Dorsolateral prefrontal cortex (tissue), 120 donors: ENCODE measurements at regions of chr9 and their contacts with region 1.

Region 1: DNA sequence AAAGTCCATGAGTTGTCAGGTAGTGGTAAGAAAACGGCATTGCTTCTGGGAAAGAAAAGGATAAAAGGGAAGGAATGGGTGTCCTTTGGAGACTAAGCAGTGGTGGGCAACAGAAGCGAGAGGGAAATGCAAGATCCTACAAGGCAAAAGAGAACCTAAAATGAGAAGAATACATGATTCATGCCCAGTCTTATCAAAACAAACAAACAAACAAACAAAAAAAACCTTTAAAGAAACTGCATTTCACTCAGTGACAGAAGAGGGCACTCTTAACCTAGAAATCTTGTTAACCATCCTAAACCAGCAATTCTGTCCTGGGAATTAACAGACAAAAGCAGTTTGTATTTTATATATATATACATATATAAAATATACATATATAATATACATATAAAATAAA is 88.5 kb downstream of the SUSD1 start:
- DNase-seq: no peak
- H3K4me3 ChIP-seq: peak overlapping the region in 2 of 59 donors; percentile 4 to 7
- H3K27ac ChIP-seq: no peak overlapping the region
- H3K27me3 ChIP-seq: no peaks in the 10 kb centered on the region
- CTCF ChIP-seq: peak; percentile 29 to 89 (median 71)

Region 2: GRCh38 chr9:111648066-111648465 is 438.6 kb before region 1 on chr9:
- intact Hi-C with region 1: no loop called
- DNase-seq: no peak
- H3K4me3 ChIP-seq: no peak overlapping the region
- H3K27ac ChIP-seq: no peak overlapping the region
- H3K27me3 ChIP-seq: no peaks in the 10 kb centered on the region
- CTCF ChIP-seq: no peak

Region 3: DNA sequence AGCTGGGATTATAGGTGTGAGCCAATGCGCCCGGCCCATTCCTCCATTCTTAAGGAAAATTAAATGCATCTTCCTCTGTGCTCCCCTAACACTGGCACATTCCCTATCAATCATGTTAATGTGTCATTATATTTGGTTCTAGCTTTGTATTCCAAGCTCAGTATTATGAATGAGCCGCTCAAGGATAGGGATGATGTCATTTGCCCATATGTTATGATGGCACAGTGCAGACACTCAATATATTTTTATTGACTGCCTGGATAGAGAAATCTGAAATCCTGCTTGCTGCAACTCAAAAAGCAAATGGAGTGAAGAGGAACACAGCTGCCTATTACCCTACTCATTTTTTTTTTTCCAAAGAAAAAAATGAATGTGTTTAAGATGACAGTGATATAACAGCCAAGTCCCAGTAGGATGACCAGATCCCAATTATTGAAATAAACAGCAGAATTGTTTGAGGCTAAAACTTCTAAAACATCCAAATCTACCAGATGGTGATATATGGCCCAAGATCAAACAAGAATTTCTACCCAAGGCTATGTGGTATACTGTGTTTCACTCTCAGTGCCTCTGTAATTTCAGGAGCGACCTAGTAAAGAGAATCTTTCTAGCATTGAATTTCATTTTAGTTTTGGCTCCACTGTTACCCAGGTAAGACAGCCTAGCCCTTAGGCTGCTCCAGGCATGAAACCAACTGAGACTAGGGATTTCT is 72.2 kb after region 1 on chr9:
- intact Hi-C with region 1: no loop called
- DNase-seq: no peak
- H3K4me3 ChIP-seq: no peak overlapping the region
- H3K27ac ChIP-seq: peak overlapping the region in 3 of 59 donors; percentile 15 to 26 (median 20)
- H3K27me3 ChIP-seq: no peaks in the 10 kb centered on the region
- CTCF ChIP-seq: no peak

Region 4: DNA sequence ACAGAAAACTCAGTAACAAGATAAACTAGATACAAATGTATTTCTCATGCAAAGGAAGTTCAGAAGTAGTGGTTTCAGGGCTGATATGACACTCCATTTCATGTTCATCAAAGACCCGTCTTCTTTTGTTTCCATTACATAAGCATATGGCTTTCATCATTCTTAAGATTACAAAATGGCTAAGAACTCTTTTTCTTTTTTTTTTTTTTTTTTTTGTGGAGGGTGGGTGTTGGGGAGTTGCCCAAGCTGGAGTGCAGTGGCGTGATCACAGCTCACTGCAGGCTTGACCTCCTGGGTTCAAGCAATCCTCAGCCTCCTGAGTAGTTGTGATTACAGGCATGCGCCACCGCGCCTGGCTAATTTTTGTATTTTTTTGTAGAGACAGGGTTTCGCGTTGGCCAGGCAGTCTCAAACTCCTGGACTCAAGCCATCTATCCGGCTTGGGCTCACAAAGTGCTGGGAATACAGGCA is 268.8 kb after region 1 on chr9:
- intact Hi-C with region 1: loop called (anchors 5 kb)
- DNase-seq: no peak
- H3K4me3 ChIP-seq: no peak overlapping the region
- H3K27ac ChIP-seq: no peak overlapping the region
- H3K27me3 ChIP-seq: no peaks in the 10 kb centered on the region
- CTCF ChIP-seq: no peak

Region 5: DNA sequence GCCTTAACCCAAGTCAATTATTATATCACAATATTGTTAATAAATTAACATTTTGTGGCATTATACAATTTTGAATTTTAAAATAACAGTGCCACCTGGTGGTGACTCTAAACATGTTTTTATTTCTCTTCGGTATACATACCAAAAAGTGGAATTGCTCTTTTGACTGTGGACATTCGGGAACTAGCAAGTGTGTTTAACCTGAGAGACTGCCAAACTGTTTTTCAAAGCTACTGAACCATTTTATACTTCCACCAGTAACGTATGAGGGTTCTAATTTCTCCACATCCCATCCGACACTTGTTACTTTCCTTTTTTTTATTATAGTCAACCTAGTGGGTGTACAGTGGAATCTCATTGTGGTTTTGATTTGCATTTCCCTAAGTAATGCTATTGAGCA is 275.0 kb after region 1 on chr9:
- intact Hi-C with region 1: loop called (anchors 5 kb)
- DNase-seq: no peak
- H3K4me3 ChIP-seq: peak overlapping the region in 5 of 59 donors; percentile 6 to 32 (median 13)
- H3K27ac ChIP-seq: no peak overlapping the region
- H3K27me3 ChIP-seq: no peaks in the 10 kb centered on the region
- CTCF ChIP-seq: peak; percentile 61 to 92 (median 76)